ENCODE measurements at regions of chr6 and their contacts with region 1.

Region 1: GRCh38 chr6:158026054-158026900 is 44.6 kb downstream of the SYNJ2 start:
- DNase-seq: peak; percentile 69

Region 2: DNA sequence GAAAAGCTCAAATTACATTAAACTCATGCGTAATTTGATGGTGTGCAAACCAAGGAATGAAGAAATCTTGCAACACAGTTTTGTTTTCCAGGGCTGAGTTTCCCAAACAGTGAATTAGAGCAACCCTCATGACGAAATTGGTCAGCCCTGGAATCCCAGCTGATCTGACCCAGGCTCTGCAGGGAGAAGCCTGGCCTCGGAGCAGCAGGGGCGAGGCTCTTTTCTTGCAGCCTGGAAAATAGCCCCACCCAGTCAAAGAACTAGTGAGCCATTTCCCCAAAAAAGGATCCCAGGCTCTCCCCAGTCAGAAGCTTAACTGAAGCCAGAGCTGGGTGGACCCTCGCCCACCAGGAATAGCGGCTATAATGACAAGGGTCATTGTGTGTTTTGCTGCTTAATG is 310.5 kb before region 1 on chr6:
- CTCF ChIA-PET with region 1: no interaction called
- POLR2A ChIA-PET with region 1: no interaction called
- DNase-seq: no peak

Region 3: DNA sequence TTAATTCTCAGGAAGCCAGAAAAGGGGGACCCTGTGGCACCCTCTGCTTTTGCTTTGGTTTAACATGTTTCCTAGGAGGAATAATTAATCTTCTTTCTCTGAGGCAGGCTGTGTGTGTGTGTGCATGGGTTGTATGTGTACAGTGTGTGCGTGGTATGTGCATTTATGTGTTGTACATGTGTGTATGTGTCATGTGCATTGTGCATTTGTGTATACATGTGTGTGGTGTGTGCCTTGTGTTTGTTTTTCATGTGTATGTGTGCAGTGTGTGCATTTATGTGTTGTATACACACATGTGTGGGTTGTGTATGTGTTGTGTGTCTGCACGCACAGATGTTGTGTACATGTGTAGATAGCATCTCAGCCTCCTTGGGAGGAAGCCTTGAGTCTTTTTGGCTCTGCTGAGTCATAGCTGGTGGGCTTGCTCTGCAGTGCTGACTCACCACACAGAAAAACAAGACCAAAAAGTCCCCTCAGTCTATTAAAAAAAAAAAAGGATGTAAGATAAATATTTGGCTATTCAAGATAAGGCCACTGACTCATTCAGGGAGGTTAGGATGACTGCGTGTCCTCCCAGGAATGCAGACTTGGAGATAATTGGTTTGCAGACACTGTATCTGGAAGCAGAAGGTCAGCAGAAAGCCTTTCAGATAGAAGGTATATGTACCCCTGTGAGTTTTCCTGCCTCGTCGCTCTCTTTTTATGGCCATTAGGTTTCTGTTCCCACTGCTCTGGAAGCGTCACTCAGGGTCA is 13.9 kb after region 1 on chr6:
- CTCF ChIA-PET with region 1: interaction called, 12 read pairs
- POLR2A ChIA-PET with region 1: interaction called, 7 read pairs
- DNase-seq: peak; percentile 51